ENCODE measurements at regions of chr6 and their contacts with region 1.

Region 1: GRCh38 chr6:30616811-30617564 is at the start of gene PPP1R10:
- DNase-seq: peak; percentile 86
- ATAC-seq: peak; percentile 77
- H3K4me3 Mint-ChIP-seq: peak within 1 kb of the TSS; percentile 99
- H3K27ac Mint-ChIP-seq: peak within 1 kb of the TSS; percentile 99
- H3K4me1 Mint-ChIP-seq: peaks cover 35% of the 10 kb centered on the region
- H3K27me3 Mint-ChIP-seq: no peaks in the 10 kb centered on the region
- CTCF ChIP-seq: no peak
- total RNA-seq, gene PPP1R10: 85.6 and 112 TPM in 2 replicates

Region 2: GRCh38 chr6:30212865-30213666 is 403.9 kb before region 1 on chr6 and contains the start of gene TRIM26:
- CTCF ChIA-PET with region 1: no interaction called
- POLR2A ChIA-PET with region 1: interaction called, 7 read pairs
- intact Hi-C with region 1: loop called (anchors 5 kb)
- DNase-seq: peak; percentile 89
- ATAC-seq: peak; percentile 85
- H3K4me3 Mint-ChIP-seq: peak within 1 kb of the TSS; percentile 98
- H3K27ac Mint-ChIP-seq: peak within 1 kb of the TSS; percentile 99
- H3K4me1 Mint-ChIP-seq: peaks cover 61% of the 10 kb centered on the region
- H3K27me3 Mint-ChIP-seq: no peaks in the 10 kb centered on the region
- CTCF ChIP-seq: no peak
- total RNA-seq, gene TRIM26: 72.5 and 75.7 TPM in 2 replicates

Region 3: DNA sequence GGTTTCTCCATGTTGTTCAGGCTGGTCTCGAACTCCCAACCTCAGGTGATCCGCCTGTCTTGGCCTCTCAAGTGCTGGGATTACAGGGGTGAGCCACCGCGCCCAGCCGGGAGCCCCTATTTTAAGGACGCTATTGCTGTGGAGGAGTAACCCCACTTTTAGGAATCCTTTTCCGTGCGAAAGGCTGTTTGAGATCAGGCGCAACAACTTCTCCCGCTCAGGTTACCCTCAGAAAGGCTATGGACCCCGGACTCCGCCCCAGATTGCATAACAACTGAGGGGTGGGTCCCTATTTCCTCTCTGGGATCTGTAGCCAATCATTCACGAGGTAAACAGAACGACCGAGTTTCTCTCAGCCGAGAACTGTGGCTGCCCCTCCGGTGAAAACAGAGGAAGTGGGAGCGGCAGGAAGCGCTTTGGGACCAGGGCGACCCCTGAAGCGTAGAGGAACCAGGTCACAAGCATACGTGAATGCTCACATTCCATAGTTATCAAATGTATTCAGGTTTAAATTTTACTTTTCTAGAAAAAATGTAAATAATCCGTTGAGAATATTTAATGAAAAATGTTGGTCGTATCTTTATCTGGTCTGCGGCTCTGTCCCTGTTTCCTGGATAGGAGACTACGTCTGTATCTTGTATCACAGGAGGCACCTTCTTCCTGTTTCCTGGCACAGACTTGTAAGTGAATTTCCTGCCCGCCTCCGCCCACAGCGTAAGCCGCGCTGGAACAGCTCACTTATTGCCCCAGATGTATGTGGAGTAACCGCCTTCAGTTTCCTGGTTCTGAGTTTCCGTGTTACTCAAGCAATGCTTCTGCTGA is 100.8 kb before region 1 on chr6:
- CTCF ChIA-PET with region 1: no interaction called
- POLR2A ChIA-PET with region 1: interaction called, 8 read pairs
- intact Hi-C with region 1: loop called (anchors 1 kb)
- DNase-seq: peak; percentile 69
- ATAC-seq: peak; percentile 82
- H3K4me3 Mint-ChIP-seq: peak overlapping the region; percentile 87
- H3K27ac Mint-ChIP-seq: peak overlapping the region; percentile 97
- H3K4me1 Mint-ChIP-seq: peaks cover 71% of the 10 kb centered on the region
- H3K27me3 Mint-ChIP-seq: no peaks in the 10 kb centered on the region
- CTCF ChIP-seq: no peak

Region 4: GRCh38 chr6:30571075-30571768 is 45.8 kb before region 1 on chr6 and contains the start of gene ABCF1:
- CTCF ChIA-PET with region 1: no interaction called
- POLR2A ChIA-PET with region 1: interaction called, 52 read pairs
- intact Hi-C with region 1: loop called (anchors 1 kb)
- DNase-seq: peak; percentile 100
- ATAC-seq: peak; percentile 95
- H3K4me3 Mint-ChIP-seq: peak within 1 kb of the TSS; percentile 99
- H3K27ac Mint-ChIP-seq: peak within 1 kb of the TSS; percentile 96
- H3K4me1 Mint-ChIP-seq: peaks cover 53% of the 10 kb centered on the region
- H3K27me3 Mint-ChIP-seq: no peaks in the 10 kb centered on the region
- CTCF ChIP-seq: no peak
- total RNA-seq, gene ABCF1: 93.7 and 94.5 TPM in 2 replicates

Region 5: GRCh38 chr6:30672445-30673253 is 55.7 kb after region 1 on chr6 and contains the start of gene DHX16:
- CTCF ChIA-PET with region 1: interaction called, 3 read pairs
- POLR2A ChIA-PET with region 1: interaction called, 17 read pairs
- intact Hi-C with region 1: loop called (anchors 2 kb)
- DNase-seq: peak; percentile 80
- ATAC-seq: peak; percentile 88
- H3K4me3 Mint-ChIP-seq: peak within 1 kb of the TSS; percentile 91
- H3K27ac Mint-ChIP-seq: peak within 1 kb of the TSS; percentile 84
- H3K4me1 Mint-ChIP-seq: peaks cover 42% of the 10 kb centered on the region
- H3K27me3 Mint-ChIP-seq: no peaks in the 10 kb centered on the region
- CTCF ChIP-seq: peak; percentile 51
- total RNA-seq, gene DHX16: 42.3 and 50.4 TPM in 2 replicates

Region 6: DNA sequence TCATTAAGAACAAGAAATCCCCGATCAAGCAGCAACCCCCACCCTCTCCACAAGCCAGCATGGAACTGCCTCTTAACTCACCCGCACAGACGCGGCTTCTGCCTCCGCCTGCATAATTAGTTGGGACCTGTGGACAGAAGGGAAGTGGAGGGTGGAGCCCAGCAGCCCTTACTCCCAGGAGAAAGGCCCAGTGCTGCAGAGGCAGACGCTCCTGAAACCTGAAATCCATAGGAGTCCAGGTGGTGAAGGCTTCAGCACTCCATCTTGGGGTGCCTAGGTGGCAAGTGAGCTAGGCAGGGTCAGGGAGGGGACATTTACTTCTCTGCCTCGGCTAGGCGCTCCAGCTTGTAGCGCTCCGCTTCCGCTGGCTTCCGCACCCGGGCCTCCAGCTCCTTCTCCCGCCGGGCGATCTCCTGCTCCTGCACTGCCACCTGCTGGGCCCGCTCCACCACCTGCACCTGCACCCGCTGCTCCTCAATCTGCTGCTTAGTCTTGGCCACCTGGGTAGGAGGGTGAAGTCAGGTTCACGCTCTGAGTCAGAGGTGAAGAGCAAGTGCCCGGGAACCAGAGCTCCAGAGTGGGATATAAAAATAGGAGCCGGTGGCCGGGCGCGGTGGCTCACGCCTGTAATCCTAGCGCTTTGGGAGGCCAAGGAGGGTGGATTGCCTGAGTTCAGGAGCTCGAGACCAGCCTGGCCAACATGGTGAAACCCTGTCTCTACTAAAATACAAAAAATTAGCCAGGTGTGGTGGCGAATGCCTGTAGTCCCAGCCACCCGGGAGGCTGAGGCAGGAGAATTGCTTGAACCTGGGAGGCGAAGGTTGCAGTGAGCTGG is 113.8 kb after region 1 on chr6:
- CTCF ChIA-PET with region 1: interaction called, 14 read pairs
- POLR2A ChIA-PET with region 1: interaction called, 10 read pairs
- intact Hi-C with region 1: no loop called
- DNase-seq: peak; percentile 69
- ATAC-seq: peak; percentile 89
- H3K4me3 Mint-ChIP-seq: peak overlapping the region; percentile 41
- H3K27ac Mint-ChIP-seq: no peak overlapping the region
- H3K4me1 Mint-ChIP-seq: peaks cover 27% of the 10 kb centered on the region
- H3K27me3 Mint-ChIP-seq: no peaks in the 10 kb centered on the region
- CTCF ChIP-seq: peak; percentile 23

Region 7: GRCh38 chr6:32177788-32178546 is 1561.0 kb after region 1 on chr6 and contains the start of gene RNF5:
- CTCF ChIA-PET with region 1: no interaction called
- POLR2A ChIA-PET with region 1: no interaction called
- intact Hi-C with region 1: loop called (anchors 5 kb)
- DNase-seq: peak; percentile 63
- ATAC-seq: peak; percentile 82
- H3K4me3 Mint-ChIP-seq: peak within 1 kb of the TSS; percentile 96
- H3K27ac Mint-ChIP-seq: peak within 1 kb of the TSS; percentile 99
- H3K4me1 Mint-ChIP-seq: peaks cover 54% of the 10 kb centered on the region
- H3K27me3 Mint-ChIP-seq: no peaks in the 10 kb centered on the region
- CTCF ChIP-seq: no peak
- total RNA-seq, gene RNF5: 39.7 and 41.8 TPM in 2 replicates